Astrocyte of the cerebellum (primary cell): ENCODE measurements at regions of chr13 and their contacts with region 1.

Region 1: GRCh38 chr13:86464193-86464592 is 665.0 kb upstream of the SLITRK6 start:
- DNase-seq: no peak
- H3K4me3 ChIP-seq: no peak overlapping the region
- CTCF ChIP-seq: peak; percentile 41

Region 2: DNA sequence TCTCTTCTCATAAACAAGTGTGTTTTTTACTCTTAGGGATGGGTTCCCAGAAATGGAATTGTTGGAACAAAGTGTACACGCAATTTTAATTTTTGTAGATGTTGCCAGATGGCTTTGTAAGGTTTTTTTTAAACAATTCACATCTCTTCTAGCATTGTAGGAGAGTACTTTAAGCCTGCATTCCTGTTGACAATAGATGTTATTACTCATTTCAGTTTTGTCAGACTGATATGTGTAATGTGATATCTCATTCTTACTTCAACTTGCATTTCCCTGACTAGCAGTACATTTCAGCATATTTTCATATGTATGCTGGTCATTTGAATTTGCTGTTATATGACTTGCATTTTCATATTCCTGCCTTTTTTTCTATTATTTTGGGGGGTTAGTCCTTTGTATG is 478.4 kb before region 1 on chr13:
- in situ Hi-C with region 1: loop called (anchors 25 kb)
- DNase-seq: peak; percentile 33
- H3K4me3 ChIP-seq: no peak overlapping the region
- CTCF ChIP-seq: no peak

Region 3: DNA sequence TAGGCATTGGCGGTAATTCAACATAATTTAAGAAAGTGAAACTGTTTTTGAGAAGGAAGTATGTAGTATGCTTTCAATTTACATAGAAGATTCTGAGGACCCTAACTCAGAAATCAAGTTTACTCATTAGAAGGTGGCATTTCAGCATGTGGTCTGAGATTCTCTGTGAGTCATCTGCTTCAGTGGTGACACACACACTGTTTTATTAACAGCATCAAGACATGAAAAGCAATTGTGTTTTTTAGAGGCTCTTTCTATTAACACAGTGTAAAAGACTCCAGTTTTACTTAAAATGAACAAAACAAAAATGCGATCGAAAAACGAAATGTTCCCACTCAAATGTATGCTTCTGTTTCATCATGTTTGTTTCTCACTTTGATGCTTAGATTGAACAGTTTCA is 137.2 kb after region 1 on chr13:
- in situ Hi-C with region 1: no loop called
- DNase-seq: no peak
- H3K4me3 ChIP-seq: no peak overlapping the region
- CTCF ChIP-seq: no peak